HEK293 (cell line): ENCODE measurements at regions of chr17 and their contacts with region 1.

Region 1: DNA sequence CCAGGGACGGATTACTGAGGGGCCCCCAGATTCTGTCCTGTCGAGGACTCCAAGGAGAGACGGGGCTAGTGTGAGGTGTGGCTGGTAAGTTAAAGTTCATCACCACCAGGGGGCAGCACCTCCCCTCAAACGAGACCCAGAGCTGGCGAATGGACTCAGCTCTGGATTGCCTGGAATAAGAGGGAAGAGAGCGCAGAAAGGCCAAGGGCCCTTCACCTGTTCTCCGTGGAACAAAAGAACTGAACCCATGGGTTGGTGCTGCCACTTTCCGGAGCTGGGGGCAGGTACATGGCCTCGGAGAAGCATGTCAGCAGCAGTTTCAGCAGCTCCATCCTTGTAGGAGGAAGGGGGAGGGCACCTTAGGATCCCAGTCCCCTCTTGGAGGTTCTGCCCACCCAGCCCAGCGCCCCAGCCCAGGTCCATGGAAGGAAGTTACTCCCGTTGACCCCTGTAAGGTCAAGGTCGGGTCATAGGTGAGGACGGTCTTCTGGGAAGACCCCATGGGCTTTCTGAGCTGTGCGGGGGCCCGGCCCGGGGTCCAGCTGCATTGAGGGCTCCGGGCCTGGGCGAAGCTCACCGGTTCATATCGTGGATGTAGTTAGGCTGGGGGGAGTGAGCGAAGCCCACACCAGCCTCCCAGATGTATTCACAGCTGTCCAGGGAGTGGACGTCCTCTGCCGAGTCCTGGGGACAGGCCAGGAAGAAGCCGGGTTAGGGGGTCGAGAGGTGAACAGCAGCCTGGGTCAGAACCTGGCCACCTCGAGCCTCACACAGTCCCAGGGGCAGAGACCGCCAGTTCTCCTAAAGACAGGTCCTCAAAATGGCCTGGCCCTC is 10.7 kb downstream of the HID1 start:
- H3K4me3 ChIP-seq: no peak overlapping the region
- H3K27ac ChIP-seq: no peak overlapping the region
- H3K4me1 ChIP-seq: no peaks in the 10 kb centered on the region
- CTCF ChIP-seq: peak; percentile 63

Region 2: DNA sequence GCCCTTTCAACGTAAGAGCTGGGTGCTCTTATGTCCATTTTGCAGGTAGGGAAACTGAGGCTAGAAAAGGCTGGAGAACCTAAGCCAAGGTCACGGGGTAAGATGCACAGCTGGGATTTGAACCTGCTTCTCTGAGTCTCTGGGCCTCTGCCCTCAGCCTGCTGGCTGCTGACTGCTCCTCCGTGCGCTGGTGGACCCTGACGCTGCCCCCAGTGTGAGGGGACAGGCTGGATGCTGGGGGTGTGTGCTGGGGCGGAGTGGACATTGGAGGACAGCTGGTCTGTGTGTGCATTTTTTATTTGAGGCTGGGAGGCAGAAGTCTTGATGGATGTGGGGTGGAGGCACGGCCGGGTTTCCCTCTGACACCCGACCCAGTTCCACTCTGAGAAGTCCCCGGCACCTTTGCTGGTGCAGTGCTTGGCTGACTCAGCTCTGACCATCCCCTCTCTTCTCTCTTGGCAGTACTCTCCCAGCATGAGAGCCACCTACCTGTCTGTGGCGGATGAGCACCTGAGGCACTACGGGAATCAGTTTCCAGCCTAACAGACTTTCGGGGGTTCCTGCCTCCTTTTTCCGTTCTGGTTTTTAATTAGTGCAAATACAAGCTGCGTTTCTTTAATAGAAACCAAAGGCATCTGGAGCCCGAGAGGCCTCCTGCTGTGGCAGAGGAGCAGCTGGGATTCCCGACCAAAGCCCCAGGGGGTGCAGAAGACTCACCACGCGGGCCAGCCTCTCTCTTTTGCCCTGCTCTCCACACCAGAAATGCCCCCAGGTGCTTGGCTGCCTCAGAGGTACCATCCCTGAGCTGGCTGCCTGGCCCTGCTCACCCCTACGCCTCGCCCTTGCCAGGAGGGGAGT is 702.0 kb before region 1 on chr17:
- CTCF ChIA-PET with region 1: no interaction called
- POLR2A ChIA-PET with region 1: no interaction called
- H3K4me3 ChIP-seq: no peak overlapping the region
- H3K27ac ChIP-seq: no peak overlapping the region
- H3K4me1 ChIP-seq: no peaks in the 10 kb centered on the region
- CTCF ChIP-seq: no peak

Region 3: GRCh38 chr17:74768069-74768762 is 193.7 kb before region 1 on chr17:
- CTCF ChIA-PET with region 1: no interaction called
- POLR2A ChIA-PET with region 1: no interaction called
- H3K4me3 ChIP-seq: no peak overlapping the region
- H3K27ac ChIP-seq: no peak overlapping the region
- H3K4me1 ChIP-seq: no peaks in the 10 kb centered on the region
- CTCF ChIP-seq: no peak

Region 4: GRCh38 chr17:74786431-74787055 is 175.3 kb before region 1 on chr17:
- CTCF ChIA-PET with region 1: interaction called, 42 read pairs
- POLR2A ChIA-PET with region 1: no interaction called
- H3K4me3 ChIP-seq: no peak overlapping the region
- H3K27ac ChIP-seq: no peak overlapping the region
- H3K4me1 ChIP-seq: no peaks in the 10 kb centered on the region
- CTCF ChIP-seq: no peak

Region 5: GRCh38 chr17:74873038-74873873 is 88.6 kb before region 1 on chr17:
- CTCF ChIA-PET with region 1: interaction called, 9 read pairs
- POLR2A ChIA-PET with region 1: interaction called, 13 read pairs
- H3K4me3 ChIP-seq: peak overlapping the region; percentile 83
- H3K27ac ChIP-seq: peak overlapping the region; percentile 62; the same call in 1 of the 2 replicates
- H3K4me1 ChIP-seq: peaks cover 10% of the 10 kb centered on the region
- CTCF ChIP-seq: no peak

Region 6: DNA sequence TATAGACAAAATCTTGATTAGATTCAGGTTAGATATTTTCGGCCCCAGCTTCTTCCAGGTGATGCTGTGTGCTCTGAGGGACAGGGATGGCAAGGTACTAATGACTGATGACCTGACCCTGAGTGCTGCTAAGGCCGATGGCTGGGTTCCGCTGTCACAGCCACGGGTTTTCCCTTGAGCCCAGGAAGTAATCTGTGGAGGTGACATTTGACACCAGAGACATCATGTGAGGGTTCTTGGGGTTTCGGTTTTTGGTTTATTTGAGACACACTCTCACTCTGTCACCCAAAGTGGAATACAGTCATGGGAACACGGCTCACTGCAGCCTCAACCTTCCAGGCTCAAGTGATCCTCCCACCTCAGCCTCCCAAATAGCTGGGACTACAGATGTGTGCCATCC is 16.3 kb before region 1 on chr17:
- CTCF ChIA-PET with region 1: interaction called, 100 read pairs
- POLR2A ChIA-PET with region 1: no interaction called
- H3K4me3 ChIP-seq: no peak overlapping the region
- H3K27ac ChIP-seq: no peak overlapping the region
- H3K4me1 ChIP-seq: no peaks in the 10 kb centered on the region
- CTCF ChIP-seq: no peak

Region 7: GRCh38 chr17:74987418-74987908 is 25.6 kb after region 1 on chr17 and contains the start of gene CDR2L:
- CTCF ChIA-PET with region 1: interaction called, 18 read pairs
- POLR2A ChIA-PET with region 1: interaction called, 7 read pairs
- H3K4me3 ChIP-seq: peak within 1 kb of the TSS; percentile 81
- H3K27ac ChIP-seq: peak within 1 kb of the TSS; percentile 88; the same call in 1 of the 2 replicates
- H3K4me1 ChIP-seq: peaks cover 3% of the 10 kb centered on the region; the same call in 1 of the 2 replicates
- CTCF ChIP-seq: no peak

Region 8: GRCh38 chr17:75012346-75013091 is 50.6 kb after region 1 on chr17 and contains the start of gene MRPL58:
- CTCF ChIA-PET with region 1: interaction called, 62 read pairs
- POLR2A ChIA-PET with region 1: interaction called, 34 read pairs
- H3K4me3 ChIP-seq: peak within 1 kb of the TSS; percentile 81
- H3K27ac ChIP-seq: peak within 1 kb of the TSS; percentile 83
- H3K4me1 ChIP-seq: peaks cover 26% of the 10 kb centered on the region
- CTCF ChIP-seq: peak; percentile 97

Region 9: DNA sequence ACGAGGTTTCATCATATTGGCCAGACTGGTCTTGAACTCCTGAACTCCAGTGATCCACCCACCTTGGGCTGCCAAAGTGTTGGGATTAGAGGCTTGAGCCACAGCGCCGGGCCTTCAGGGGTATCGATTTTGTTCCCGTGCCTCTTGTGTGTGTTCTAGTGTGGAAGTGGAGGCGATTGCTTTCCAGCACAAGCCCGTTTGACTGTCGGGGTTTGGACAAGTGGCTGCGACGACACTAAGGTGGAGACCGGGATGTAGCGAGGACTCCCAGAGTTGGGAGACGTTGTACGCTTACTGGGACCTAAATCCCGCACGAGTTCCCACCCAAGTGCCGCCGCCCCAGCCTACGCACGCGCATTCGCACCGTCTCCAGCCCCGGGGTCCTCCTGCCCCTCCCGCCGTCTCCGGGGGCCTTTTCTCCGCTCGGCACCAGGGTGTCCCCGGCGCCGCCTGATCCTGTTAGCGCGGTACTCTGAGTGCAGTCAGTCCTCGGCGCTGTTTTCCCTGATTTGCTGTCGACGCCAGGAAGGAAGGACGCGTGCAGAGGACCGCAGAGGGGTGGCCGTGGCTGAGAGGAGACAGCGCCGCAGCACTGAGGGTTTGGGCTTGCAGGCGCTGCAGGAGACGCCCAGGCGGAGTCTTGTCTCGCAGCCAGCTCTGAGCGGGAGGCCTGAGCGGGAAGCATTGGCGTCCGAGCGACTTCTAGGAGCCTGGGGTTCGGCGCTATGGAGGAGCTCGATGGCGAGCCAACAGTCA is 243.3 kb after region 1 on chr17 and contains the start of gene NUP85:
- CTCF ChIA-PET with region 1: interaction called, 43 read pairs
- POLR2A ChIA-PET with region 1: interaction called, 6 read pairs
- H3K4me3 ChIP-seq: peak within 1 kb of the TSS; percentile 98
- H3K27ac ChIP-seq: peak within 1 kb of the TSS; percentile 99
- H3K4me1 ChIP-seq: no peaks in the 10 kb centered on the region
- CTCF ChIP-seq: peak; percentile 96

Region 10: DNA sequence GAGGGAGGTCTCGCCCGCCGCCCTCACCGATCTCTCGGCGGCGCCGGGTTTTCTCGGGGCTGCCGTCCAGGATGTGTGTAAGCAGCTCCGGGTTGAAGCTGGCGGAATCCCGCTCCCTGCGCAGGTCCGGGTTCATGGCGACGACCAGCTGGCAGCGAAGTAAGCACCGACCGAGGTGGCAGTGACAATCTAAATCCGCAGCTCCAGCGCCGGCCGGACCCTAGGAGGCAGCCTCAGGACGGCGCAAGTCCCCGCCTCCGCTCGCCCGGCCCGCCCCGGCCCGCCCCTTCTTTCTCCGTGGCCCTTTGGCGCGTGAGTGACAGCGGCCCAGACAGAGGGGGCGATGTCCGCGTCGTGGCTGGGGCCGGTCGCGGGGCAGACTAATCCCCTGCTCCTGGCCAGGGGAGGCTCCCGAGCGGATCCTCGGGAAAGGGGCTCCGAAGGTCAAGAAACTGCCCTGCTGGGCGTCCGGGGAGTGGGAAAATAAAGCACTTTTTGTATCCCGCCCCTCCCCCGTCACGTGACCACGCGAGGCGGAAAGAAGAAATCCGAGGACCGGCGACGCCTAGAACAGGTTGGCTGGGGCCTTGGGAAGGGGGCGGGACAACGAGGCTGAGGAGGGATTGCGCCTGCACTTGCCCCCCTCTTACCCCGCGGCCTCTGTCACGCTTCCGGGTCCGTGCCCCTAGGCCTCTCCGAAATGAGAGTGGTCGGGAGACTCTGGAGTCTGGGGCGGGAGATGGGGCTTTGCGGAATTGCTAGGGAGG is 1017.2 kb after region 1 on chr17 and contains the starts of genes ACOX1 and TEN1:
- CTCF ChIA-PET with region 1: no interaction called
- POLR2A ChIA-PET with region 1: no interaction called
- H3K4me3 ChIP-seq: peak within 1 kb of the TSS; percentile 77
- H3K27ac ChIP-seq: peak within 1 kb of the TSS; percentile 96
- H3K4me1 ChIP-seq: peaks cover 24% of the 10 kb centered on the region
- CTCF ChIP-seq: peak; percentile 83